ENCODE measurements at regions of chr6 and their contacts with region 1.

Region 1: DNA sequence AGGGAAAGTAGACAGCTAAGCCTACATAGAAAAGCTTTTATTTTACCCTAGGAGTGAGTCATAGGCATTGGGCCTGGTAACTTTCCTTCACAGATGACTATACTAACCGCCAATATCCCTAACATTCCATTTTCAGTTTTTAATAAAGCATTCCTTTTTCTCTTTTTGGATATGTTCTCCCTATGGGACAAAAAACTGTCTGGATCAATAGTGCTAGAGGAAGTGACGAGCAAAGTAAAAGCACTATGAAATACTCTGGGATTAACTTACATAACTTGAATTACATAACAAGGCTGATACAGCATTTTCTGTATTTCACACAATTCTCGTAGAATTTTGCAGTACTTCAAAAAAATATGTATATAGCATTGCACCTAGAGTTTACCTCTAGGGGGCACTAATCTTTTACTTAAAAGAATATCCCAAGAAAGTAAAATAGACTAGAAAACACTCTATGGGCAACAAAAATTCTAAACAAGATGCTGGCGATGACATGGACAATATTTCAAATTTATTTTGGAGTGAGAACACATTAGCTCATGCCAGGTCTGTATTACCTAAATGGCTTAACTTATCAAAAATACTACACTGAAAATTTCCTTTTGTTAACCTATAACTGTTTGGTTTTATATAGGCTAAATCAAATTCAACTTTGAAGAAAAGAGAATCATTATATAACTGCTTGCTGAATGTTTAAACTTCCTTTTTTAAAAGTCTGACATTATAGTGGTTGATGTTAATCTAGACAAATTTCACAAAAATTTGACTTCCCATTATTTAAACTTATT is 66.3 kb upstream of the DST start:
- DNase-seq: no peak
- H3K4me3 Mint-ChIP-seq: no peak overlapping the region
- H3K27ac Mint-ChIP-seq: no peak overlapping the region
- H3K4me1 Mint-ChIP-seq: no peaks in the 10 kb centered on the region
- H3K27me3 Mint-ChIP-seq: no peaks in the 10 kb centered on the region

Region 2: DNA sequence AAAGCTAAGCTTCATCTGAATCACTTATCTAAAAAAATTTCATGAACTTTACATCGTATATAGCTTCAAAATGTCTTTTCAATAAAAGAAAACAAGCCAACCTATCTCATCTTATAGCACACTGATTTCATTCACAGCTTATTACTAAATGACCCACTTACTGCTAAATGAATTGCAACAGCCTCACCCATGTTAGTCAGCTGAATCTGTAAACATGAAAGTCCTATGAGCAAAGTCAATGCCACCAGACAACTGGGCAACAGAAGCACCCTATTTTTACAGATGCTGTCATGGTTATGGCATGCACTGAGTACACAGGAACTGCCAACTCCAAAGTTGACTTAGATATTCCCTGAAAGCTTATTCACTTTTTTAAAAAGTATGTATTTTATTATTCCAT is 25.1 kb before region 1 on chr6:
- intact Hi-C with region 1: no loop called
- DNase-seq: no peak
- H3K4me3 Mint-ChIP-seq: no peak overlapping the region
- H3K27ac Mint-ChIP-seq: no peak overlapping the region
- H3K4me1 Mint-ChIP-seq: no peaks in the 10 kb centered on the region
- H3K27me3 Mint-ChIP-seq: peaks cover 7% of the 10 kb centered on the region

Region 3: GRCh38 chr6:56843573-56844349 is 134.8 kb after region 1 on chr6:
- intact Hi-C with region 1: loop called (anchors 1 kb)
- DNase-seq: peak; percentile 57
- H3K4me3 Mint-ChIP-seq: peak overlapping the region; percentile 78
- H3K27ac Mint-ChIP-seq: peak overlapping the region; percentile 32
- H3K4me1 Mint-ChIP-seq: peaks cover 9% of the 10 kb centered on the region
- H3K27me3 Mint-ChIP-seq: peaks cover 52% of the 10 kb centered on the region

Region 4: DNA sequence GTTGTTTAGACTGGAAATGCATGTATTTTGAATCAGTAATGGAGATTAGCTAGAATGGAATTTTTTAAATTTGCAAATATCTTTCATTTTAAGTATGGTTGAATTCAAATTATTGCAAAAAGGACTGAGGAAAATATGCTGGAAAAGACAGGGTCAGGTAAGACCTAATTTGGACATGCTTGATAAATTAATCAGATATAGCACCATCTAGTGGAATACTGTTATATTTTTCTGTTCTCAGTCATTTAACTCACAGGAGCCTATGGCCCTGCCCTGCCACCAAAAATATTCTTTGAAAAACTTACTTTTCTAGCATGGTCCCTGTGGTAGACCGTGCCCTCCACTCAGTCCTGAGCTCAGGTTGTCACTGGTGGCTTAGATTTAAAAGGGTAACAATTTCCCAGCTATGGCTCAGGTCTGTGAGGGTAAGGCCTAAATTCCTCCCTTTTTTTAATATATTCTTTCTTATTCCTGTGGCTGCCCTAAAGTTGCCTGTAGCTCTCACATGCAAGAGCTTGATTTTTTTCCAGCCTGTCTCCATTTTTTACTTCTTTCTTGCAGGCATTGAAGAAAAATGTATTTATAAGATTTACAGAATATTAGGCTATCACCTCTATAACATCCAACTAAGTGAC is 312.2 kb after region 1 on chr6:
- intact Hi-C with region 1: loop called (anchors 1 kb)
- DNase-seq: no peak
- H3K4me3 Mint-ChIP-seq: no peak overlapping the region
- H3K27ac Mint-ChIP-seq: no peak overlapping the region
- H3K4me1 Mint-ChIP-seq: no peaks in the 10 kb centered on the region
- H3K27me3 Mint-ChIP-seq: peaks cover 14% of the 10 kb centered on the region

Measured in activated T-helper 1 cell treated with anti-CD3 and anti-CD28 coated beads, Interleukin-12 subunit alpha, Interleukin-12 subunit beta, Interleukin-2, Interleukin-4 antibody, amounts not matched to agents 30 ng/mL and 10 ng/mL and 1 ng/mL, durations not matched to agents 14 hours and 24 hours and 36 hours (primary cell).